ENCODE measurements at regions of chr4 and their contacts with region 1.

Region 1: GRCh38 chr4:11720292-11720691 is 291.6 kb upstream of the HS3ST1 start:
- DNase-seq: peak; percentile 67
- ATAC-seq: peak; percentile 55
- H3K4me3 ChIP-seq: no peak overlapping the region
- H3K27ac ChIP-seq: peak overlapping the region; percentile 61
- H3K4me1 ChIP-seq: peaks cover 14% of the 10 kb centered on the region
- H3K27me3 ChIP-seq: no peaks in the 10 kb centered on the region
- CTCF ChIP-seq: peak; percentile 74

Region 2: DNA sequence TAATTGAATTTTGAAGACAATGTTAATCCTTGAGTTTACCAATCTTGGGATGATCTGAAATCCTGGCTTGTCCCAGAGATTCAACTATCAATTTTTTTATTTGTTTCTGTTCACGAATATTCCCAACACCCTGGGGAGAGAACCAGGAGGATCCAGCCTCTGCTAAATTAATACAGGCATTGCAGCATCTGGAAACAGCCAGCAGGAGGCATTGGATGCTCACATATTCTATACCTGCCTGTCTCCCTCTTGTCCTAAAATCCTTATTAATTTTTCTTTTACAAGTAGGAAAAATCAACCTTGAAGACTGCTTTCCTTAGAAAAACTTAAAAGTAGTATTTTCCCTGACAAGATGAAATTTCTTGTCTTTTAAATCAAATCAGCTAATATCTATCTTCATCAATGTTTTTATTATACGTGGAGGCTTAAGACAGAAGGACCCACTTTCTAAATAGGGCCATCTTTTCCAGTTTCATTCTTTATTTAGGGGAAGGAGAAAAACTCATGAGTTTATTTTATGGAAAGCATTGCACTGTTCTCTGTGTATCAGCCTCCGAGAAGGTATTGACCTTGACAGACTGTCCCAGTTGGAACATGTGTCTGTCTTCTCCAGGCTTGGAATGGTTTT is 1138.1 kb before region 1 on chr4:
- CTCF ChIA-PET with region 1: no interaction called
- POLR2A ChIA-PET with region 1: no interaction called
- intact Hi-C with region 1: loop called (anchors 1 kb)
- DNase-seq: peak; percentile 63
- ATAC-seq: peak; percentile 42
- H3K4me3 ChIP-seq: no peak overlapping the region
- H3K27ac ChIP-seq: no peak overlapping the region
- H3K4me1 ChIP-seq: no peaks in the 10 kb centered on the region
- H3K27me3 ChIP-seq: no peaks in the 10 kb centered on the region
- CTCF ChIP-seq: peak; percentile 83

Region 3: GRCh38 chr4:11505221-11505971 is 214.9 kb before region 1 on chr4:
- CTCF ChIA-PET with region 1: no interaction called
- POLR2A ChIA-PET with region 1: no interaction called
- intact Hi-C with region 1: loop called (anchors 1 kb)
- DNase-seq: peak; percentile 95
- ATAC-seq: peak; percentile 95
- H3K4me3 ChIP-seq: no peak overlapping the region
- H3K27ac ChIP-seq: peak overlapping the region; percentile 94
- H3K4me1 ChIP-seq: peaks cover 24% of the 10 kb centered on the region
- H3K27me3 ChIP-seq: no peaks in the 10 kb centered on the region
- CTCF ChIP-seq: no peak

Region 4: DNA sequence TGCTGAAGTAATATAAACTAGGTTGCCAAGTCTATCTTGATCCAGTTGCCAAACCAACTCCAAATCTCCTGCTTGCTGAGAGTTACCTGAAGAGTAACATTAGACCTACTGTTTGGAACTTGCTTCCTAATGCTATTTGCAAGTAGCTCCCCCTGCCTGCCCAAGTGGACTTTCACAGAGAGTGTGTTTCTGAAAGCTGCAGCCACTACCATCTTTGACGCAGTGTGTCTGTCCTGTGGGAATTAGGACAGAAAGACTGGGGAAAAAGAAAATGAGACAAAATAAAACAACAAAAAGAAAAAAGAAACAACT is 96.6 kb before region 1 on chr4:
- CTCF ChIA-PET with region 1: no interaction called
- POLR2A ChIA-PET with region 1: no interaction called
- intact Hi-C with region 1: loop called (anchors 1 kb)
- DNase-seq: peak; percentile 63
- ATAC-seq: peak; percentile 84
- H3K4me3 ChIP-seq: no peak overlapping the region
- H3K27ac ChIP-seq: peak overlapping the region; percentile 82
- H3K4me1 ChIP-seq: peaks cover 58% of the 10 kb centered on the region
- H3K27me3 ChIP-seq: no peaks in the 10 kb centered on the region
- CTCF ChIP-seq: peak; percentile 69

Region 5: DNA sequence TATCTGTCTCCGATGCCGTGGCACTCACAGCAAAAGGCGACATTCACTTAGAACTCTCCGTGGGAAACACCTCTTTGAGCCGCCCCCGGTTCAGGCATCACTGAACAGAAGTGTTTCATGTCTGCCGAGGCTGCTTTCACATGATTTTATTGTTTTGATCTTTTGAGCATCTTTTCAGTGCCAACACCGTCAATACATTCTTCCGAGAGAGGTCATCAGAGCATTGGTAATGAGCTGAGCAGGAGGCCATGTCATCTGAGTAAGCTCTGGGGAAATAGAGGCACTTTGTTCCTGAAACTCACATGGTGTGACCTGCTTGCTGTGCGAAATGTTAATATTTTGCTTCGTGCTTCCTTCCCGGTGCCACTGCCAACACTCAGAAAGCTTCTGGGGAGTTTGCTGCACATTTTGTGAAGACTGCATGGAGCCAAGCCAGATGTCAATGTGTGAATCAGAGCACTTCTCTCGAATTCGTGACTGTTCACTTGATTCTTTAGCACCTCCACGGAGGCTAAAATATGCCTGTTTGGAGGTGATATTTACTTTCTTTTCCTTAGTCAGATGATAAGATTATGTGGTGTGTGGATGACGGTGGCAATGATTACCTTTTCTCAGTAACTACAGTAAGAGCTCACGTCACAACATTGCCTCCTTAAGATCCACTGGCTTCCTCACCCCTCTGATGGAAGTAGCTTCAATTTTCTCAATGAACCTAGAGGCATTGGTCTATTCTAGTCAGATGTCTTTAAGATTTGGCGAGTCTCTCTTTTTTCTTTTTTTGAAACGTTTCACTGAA is 69.3 kb before region 1 on chr4:
- CTCF ChIA-PET with region 1: no interaction called
- POLR2A ChIA-PET with region 1: no interaction called
- intact Hi-C with region 1: loop called (anchors 1 kb)
- DNase-seq: peak; percentile 50
- ATAC-seq: peak; percentile 73
- H3K4me3 ChIP-seq: peak overlapping the region; percentile 51
- H3K27ac ChIP-seq: peak overlapping the region; percentile 69
- H3K4me1 ChIP-seq: peaks cover 8% of the 10 kb centered on the region
- H3K27me3 ChIP-seq: no peaks in the 10 kb centered on the region
- CTCF ChIP-seq: 0 out of 2 replicates have a peak, but pooled peaks have one; percentile 11

Region 6: DNA sequence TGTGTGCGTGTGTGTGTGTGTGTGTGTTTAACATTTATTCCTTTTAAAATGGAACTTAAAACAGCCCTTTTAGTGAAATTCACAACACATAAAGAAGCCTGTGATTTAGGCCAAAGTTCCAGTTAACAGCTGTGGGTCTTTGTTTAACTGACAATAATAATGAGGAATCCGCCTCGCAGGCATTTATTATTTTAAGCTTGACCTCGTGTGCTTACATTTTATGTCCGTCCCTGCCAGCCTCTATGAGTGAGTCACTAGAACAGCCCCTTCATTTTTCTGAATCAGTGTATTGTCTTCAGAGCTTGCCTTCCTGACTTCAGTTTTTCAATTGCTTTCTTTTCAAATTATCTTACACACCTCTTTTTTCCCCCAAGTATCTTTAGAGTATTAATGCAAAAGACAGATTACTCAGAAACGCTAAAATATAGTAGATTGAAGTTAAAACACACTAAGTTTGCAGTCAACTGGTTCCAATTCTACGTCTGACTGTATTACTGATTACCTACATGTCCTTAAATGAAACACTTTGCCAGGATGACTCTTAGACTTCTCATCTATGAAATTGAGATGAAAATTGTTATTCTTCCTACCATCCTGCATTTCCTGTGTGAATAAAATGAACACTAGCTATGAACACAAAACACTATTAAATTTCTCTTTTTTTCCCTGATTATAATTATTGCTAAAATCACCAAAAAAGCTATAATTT is 28.0 kb after region 1 on chr4:
- CTCF ChIA-PET with region 1: no interaction called
- POLR2A ChIA-PET with region 1: interaction called, 3 read pairs
- intact Hi-C with region 1: loop called (anchors 2 kb)
- DNase-seq: peak; percentile 76
- ATAC-seq: peak; percentile 97
- H3K4me3 ChIP-seq: peak overlapping the region; percentile 46; the same call in 1 of the 2 replicates
- H3K27ac ChIP-seq: peak overlapping the region; percentile 82
- H3K4me1 ChIP-seq: peaks cover 16% of the 10 kb centered on the region
- H3K27me3 ChIP-seq: no peaks in the 10 kb centered on the region
- CTCF ChIP-seq: no peak

Region 7: GRCh38 chr4:11860996-11861395 is 140.7 kb after region 1 on chr4:
- CTCF ChIA-PET with region 1: no interaction called
- POLR2A ChIA-PET with region 1: no interaction called
- intact Hi-C with region 1: no loop called
- DNase-seq: no peak
- ATAC-seq: no peak
- H3K4me3 ChIP-seq: no peak overlapping the region
- H3K27ac ChIP-seq: no peak overlapping the region
- H3K4me1 ChIP-seq: no peaks in the 10 kb centered on the region
- H3K27me3 ChIP-seq: no peaks in the 10 kb centered on the region; the same call in 1 of the 2 replicates
- CTCF ChIP-seq: no peak